Activated CD4-positive, alpha-beta T cell treated with anti-CD3 and anti-CD28 coated beads for 36 hours (primary cell): ENCODE measurements at regions of chrX and their contacts with region 1.

Region 1: DNA sequence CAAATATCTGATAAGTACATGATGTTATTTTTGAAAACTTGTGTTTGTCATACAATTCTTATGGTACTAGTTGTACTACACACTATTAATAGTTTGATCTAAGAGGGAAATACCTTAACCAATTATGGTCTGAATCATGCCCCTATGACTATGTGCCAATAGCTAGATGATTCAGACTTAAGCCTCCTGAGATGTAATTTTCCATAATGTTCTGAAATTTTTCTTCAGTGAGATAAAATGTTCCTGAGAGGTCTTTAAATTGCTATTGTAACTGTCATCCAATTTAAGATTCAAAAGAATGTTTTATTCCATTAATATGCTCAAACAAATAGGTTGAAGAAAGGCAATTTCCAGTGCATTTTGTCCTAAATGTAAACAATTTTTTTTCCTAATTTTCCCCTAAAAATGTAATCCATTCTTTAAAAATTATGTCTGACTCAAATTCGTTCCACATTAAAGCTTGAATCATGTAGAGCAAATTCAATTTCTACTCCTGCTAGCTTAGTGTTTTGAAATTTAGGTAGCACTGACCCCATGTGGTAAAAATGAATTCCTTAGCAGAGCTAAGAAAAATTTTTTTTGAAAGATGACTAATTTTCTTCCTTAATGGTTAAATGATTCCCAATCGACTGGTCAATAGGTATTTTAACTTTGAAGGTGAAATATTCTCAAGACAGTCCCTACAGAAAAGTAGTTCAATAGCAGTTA is 49.1 kb downstream of the APOOL start:
- DNase-seq: no peak
- ATAC-seq: peak; percentile 78
- H3K4me3 Mint-ChIP-seq: no peak overlapping the region
- H3K27ac Mint-ChIP-seq: no peak overlapping the region
- H3K4me1 Mint-ChIP-seq: peaks cover 4% of the 10 kb centered on the region
- H3K27me3 Mint-ChIP-seq: no peaks in the 10 kb centered on the region

Region 2: GRCh38 chrX:84046403-84046984 is 1006.3 kb before region 1 on chrX:
- CTCF ChIA-PET with region 1: no interaction called
- POLR2A ChIA-PET with region 1: no interaction called
- intact Hi-C with region 1: loop called in 1 of 2 experiments (anchors 5 kb)
- DNase-seq: peak; percentile 19
- ATAC-seq: peak; percentile 55
- H3K4me3 Mint-ChIP-seq: no peak overlapping the region
- H3K27ac Mint-ChIP-seq: no peak overlapping the region
- H3K4me1 Mint-ChIP-seq: no peaks in the 10 kb centered on the region
- H3K27me3 Mint-ChIP-seq: no peaks in the 10 kb centered on the region

Region 3: GRCh38 chrX:84729809-84730208 is 323.0 kb before region 1 on chrX:
- CTCF ChIA-PET with region 1: no interaction called
- POLR2A ChIA-PET with region 1: no interaction called
- intact Hi-C with region 1: loop called in 1 of 2 experiments (anchors 2 kb)
- DNase-seq: peak; percentile 7
- ATAC-seq: peak; percentile 75
- H3K4me3 Mint-ChIP-seq: no peak overlapping the region
- H3K27ac Mint-ChIP-seq: no peak overlapping the region
- H3K4me1 Mint-ChIP-seq: no peaks in the 10 kb centered on the region
- H3K27me3 Mint-ChIP-seq: no peaks in the 10 kb centered on the region

Region 4: DNA sequence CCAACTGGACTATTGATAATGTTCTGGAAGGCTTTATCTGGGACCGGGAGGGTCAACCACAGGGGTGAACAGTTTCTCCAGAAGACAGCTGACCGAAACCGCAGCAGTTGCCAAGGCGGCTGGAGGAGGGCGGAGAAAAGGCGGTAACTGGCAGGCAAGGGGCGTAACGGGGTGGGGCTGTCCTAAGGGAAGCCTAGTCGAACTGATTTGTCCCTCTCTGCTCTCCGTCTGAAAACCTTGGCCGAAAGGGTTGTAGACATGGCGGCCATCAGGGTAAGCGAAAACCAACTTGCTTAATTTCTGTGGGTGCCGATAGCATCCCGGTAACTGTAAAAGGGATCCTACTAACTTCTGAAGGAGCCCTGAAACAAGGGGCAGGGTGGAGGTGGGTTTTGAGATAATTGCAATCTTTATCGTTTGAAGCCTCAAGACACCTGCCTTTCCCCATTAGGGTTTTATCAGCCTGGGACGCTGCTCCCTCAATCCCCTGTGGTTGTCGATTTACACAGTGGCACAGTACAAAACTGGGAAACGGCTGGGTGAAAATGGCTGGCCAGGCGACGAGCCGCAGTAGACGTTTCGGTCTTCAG is 49.0 kb before region 1 on chrX and contains the start of gene APOOL:
- CTCF ChIA-PET with region 1: no interaction called
- POLR2A ChIA-PET with region 1: no interaction called
- intact Hi-C with region 1: loop called in 1 of 2 experiments (anchors 5 kb)
- DNase-seq: peak; percentile 88
- ATAC-seq: peak; percentile 93
- H3K4me3 Mint-ChIP-seq: peak within 1 kb of the TSS; percentile 79
- H3K27ac Mint-ChIP-seq: peak within 1 kb of the TSS; percentile 58
- H3K4me1 Mint-ChIP-seq: peaks cover 21% of the 10 kb centered on the region
- H3K27me3 Mint-ChIP-seq: no peaks in the 10 kb centered on the region
- total RNA-seq, gene APOOL: 18.3 to 22.3 TPM